ENCODE measurements at regions of chr2 and their contacts with region 1.

Region 1: GRCh38 chr2:230987137-230988020 is 8.5 kb upstream of the SPATA3 start:
- DNase-seq: peak; percentile 65 to 80 (median 75)
- H3K4me3 ChIP-seq: peak overlapping the region; percentile 62
- H3K4me3 Mint-ChIP-seq: peak overlapping the region in 6 of 7 donors; percentile 38 to 79 (median 58)
- H3K27ac ChIP-seq: no peak overlapping the region
- H3K27ac Mint-ChIP-seq: peak overlapping the region in 3 of 8 donors; percentile 15 to 68 (median 17)
- H3K4me1 ChIP-seq: peaks cover 9% of the 10 kb centered on the region
- H3K4me1 Mint-ChIP-seq: peaks cover 3 to 40% (median 25%) of the 10 kb centered on the region in 3 donors
- H3K27me3 ChIP-seq: no peaks in the 10 kb centered on the region
- H3K27me3 Mint-ChIP-seq: peaks cover 9 to 12% of the 10 kb centered on the region in 2 donors

Region 2: DNA sequence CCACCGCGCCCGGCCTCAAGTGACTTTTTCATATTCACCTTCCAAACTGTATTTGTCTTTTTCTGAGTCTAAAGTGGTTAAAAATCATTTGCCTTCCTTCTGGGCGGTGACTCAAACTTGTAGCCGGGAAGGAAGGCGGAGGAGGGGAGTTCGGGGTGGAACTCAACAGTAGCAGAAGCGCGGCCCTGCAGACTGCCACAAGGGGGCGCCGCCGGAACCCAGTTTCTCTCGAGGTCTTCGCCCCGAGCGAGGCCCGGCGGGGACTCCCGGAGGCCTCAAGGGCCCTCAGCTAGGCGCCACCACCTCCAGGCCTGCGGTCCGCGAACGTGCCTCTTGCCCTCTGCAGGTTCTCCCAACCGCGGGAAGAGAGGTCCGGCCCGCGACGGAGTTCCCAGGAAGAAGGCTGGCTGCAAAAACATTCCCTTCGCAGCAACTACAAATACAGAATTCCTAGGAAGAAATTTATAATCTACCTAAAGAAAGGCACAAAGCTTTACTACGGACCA is 139.4 kb before region 1 on chr2:
- CTCF ChIA-PET with region 1: interaction called, 82 read pairs
- POLR2A ChIA-PET with region 1: no interaction called
- DNase-seq: peak; percentile 70 to 89 (median 76)
- H3K4me3 ChIP-seq: no peak overlapping the region
- H3K4me3 Mint-ChIP-seq: peak overlapping the region in 1 of 7 donors; percentile 24
- H3K27ac ChIP-seq: no peak overlapping the region
- H3K27ac Mint-ChIP-seq: no peak overlapping the region
- H3K4me1 ChIP-seq: peaks cover 6% of the 10 kb centered on the region
- H3K4me1 Mint-ChIP-seq: peaks cover 5 to 9% (median 6%) of the 10 kb centered on the region in 3 donors
- H3K27me3 ChIP-seq: no peaks in the 10 kb centered on the region
- H3K27me3 Mint-ChIP-seq: peaks cover 24 to 40% of the 10 kb centered on the region in 2 donors

Region 3: DNA sequence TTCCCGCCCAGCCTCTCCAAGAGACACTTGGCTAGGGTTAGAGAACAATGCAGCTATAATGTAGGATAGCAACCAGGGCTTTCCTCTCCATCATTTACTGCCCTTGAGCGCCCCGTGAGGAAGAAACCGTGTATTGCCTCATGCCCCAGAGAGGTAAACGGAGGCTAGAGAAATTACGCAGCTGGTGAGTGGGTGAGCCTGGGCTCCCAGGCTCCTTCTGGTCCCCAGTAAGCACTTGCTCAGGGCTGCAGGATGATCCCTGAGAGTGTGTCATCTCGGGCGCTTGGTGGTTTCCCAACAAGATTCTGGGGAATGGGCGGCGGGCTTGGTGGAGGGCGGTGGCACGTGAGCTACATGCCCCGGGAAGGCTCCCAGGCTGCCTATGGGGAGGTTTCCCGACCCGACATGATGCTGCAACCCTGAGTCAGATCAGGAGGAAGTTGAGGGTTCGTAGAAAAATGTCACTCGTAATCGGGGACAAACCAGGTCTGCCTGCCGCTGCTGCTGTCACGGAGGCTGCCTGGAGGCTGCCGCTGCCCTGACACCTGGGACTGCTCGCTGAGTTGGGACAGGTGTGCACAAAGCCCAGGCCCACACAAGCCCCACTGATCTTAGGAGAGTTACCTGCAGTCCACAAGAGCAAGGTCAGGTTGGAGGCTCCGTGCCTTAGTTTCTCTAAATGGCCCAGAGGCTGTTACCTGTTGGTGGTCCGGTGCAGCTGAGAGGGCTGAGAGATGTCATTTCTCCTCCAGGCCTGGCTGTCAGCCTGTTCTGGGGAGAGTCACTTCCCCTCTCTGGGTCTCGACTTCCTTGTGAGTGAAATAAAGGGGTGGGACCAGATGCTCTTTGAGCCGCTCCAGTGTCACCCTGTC is 62.7 kb before region 1 on chr2 and contains the start of gene GPR55:
- CTCF ChIA-PET with region 1: interaction called, 79 read pairs
- POLR2A ChIA-PET with region 1: interaction called, 4 read pairs
- DNase-seq: peak in 3 of 5 donors; percentile 18 to 73 (median 59)
- H3K4me3 ChIP-seq: peak within 1 kb of the TSS; percentile 61
- H3K4me3 Mint-ChIP-seq: peak within 1 kb of the TSS; percentile 85 to 94 (median 91)
- H3K27ac ChIP-seq: peak within 1 kb of the TSS; percentile 13
- H3K27ac Mint-ChIP-seq: peak within 1 kb of the TSS; percentile 61 to 97 (median 86)
- H3K4me1 ChIP-seq: peaks cover 21% of the 10 kb centered on the region
- H3K4me1 Mint-ChIP-seq: peaks cover 39 to 65% (median 50%) of the 10 kb centered on the region in 3 donors
- H3K27me3 ChIP-seq: no peaks in the 10 kb centered on the region
- H3K27me3 Mint-ChIP-seq: peaks cover 6 to 7% of the 10 kb centered on the region in 2 donors
- total RNA-seq, gene GPR55: 11.1 to 11.6 TPM

Region 4: DNA sequence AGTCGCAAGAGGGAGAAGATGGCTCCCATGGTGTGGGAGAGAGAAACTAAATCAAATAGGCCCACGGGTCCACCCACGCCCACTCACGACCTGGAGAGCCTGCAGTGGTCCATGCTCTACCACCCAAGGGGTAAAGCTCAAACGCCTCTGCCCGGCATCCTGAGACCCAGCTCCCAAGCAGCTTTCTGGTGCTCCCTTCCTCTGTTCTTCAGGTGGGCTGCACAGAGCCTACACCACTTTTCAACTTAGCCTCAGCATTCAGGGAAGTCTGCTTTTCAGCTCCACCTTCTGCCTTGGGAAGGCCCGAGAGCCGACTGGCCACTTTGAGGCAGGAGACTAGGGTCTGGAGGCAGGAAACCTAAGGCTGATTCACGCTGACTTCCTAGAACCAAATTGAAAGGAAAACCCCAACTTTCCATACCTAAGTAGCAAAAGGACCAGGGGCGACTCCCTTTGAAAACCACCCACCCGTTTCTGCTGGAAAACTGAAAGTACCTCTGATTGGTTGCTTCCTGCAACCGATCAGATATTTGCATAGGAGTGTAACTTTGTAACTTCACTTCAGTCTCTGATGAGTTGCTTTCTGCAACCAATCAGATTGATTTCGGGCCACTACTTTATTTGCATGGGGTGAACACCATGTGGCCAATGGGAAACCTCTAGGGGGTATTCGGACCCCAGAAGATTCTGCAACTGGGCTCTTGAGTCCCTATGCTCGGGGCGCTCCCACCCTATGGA is 18.3 kb before region 1 on chr2:
- CTCF ChIA-PET with region 1: interaction called, 24 read pairs
- POLR2A ChIA-PET with region 1: no interaction called
- DNase-seq: no peak
- H3K4me3 ChIP-seq: no peak overlapping the region
- H3K4me3 Mint-ChIP-seq: peak overlapping the region in 4 of 7 donors; percentile 21 to 70 (median 58)
- H3K27ac ChIP-seq: no peak overlapping the region
- H3K27ac Mint-ChIP-seq: peak overlapping the region in 2 of 8 donors; percentile 17 to 51
- H3K4me1 ChIP-seq: peaks cover 14% of the 10 kb centered on the region
- H3K4me1 Mint-ChIP-seq: peaks cover 12 to 32% (median 22%) of the 10 kb centered on the region in 3 donors
- H3K27me3 ChIP-seq: no peaks in the 10 kb centered on the region
- H3K27me3 Mint-ChIP-seq: peaks cover 0 to 1% of the 10 kb centered on the region in 2 donors